A673 (cell line): ENCODE measurements at regions of chr15 and their contacts with region 1.

Region 1: DNA sequence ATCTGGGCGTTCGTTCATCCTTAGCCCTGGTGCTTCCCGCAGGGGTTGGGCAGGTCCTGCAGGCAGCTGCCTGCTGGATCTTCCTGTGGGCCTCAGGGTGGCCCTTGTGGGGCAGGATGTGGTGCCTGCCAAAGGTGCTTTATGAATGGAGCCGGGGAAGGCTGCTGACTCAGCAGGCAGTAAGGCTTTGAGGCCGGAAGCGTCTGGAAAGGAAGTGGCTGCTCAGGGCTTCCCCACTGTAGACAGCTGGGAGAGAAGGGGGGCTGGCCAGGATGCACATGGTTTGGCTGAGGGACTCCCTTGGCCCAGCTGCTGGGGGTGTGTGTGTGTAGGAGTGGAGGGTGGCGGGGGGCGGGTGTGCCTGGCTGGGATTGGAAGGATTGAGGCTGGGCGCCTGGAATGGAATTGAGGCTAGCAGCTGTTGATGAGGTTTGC is 12.9 kb downstream of the CD276 start:
- DNase-seq: peak; percentile 98
- H3K4me3 ChIP-seq: no peak overlapping the region
- H3K27ac ChIP-seq: peak overlapping the region; percentile 70
- H3K4me1 ChIP-seq: peaks cover 28% of the 10 kb centered on the region
- H3K27me3 ChIP-seq: no peaks in the 10 kb centered on the region
- CTCF ChIP-seq: no peak

Region 2: DNA sequence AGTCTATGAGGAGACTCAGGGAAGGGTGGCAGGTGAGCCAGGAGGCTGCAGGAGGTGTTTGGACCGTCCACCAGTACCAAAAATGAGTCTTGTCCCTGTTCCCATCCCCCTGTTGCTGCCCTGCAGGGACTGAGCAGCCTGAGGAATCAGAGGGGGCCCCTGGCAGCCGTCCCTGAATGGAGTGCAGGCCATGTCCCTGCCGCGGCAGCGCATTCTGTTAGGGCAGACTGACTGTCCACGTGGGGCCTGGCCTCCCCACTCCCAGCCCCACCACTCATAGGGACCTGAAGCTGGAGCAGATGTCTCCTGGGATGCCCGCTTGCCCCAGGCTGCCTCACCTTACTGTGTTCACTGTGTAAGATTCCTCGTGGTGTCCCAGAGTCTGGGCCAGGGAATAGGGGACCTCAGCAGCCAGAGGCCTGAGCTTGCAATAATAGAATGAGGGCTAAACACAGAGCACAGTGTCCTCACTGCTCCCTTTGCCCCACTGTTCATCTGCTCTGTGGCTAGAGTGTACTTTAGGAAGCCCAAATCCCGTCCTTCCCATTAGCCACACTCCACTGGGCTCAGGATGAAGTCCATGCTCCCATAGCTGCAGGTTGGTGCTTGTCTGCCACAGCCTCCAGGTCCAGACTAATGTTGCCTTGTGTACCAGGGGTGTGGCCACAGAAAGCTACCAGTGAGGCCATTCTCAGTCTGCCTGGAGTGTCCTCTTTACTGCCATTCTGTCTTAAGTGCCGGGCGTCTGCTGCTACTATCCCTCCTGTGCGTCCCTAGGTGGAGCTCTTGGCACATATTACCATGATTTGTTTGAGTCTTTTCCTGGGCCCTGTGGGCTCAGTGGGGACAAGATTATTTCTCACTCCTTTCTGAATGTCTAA is 391.5 kb before region 1 on chr15:
- CTCF ChIA-PET with region 1: no interaction called
- POLR2A ChIA-PET with region 1: no interaction called
- intact Hi-C with region 1: loop called (anchors 5 kb)
- DNase-seq: peak; percentile 71
- H3K4me3 ChIP-seq: no peak overlapping the region
- H3K27ac ChIP-seq: no peak overlapping the region
- H3K4me1 ChIP-seq: no peaks in the 10 kb centered on the region
- H3K27me3 ChIP-seq: no peaks in the 10 kb centered on the region
- CTCF ChIP-seq: peak; percentile 72

Region 3: GRCh38 chr15:73633111-73633990 is 63.7 kb before region 1 on chr15 and contains the start of gene NPTN:
- CTCF ChIA-PET with region 1: interaction called, 38 read pairs
- POLR2A ChIA-PET with region 1: no interaction called
- intact Hi-C with region 1: loop called (anchors 1 kb)
- DNase-seq: peak; percentile 98
- H3K4me3 ChIP-seq: peak within 1 kb of the TSS; percentile 75
- H3K27ac ChIP-seq: peak within 1 kb of the TSS; percentile 82
- H3K4me1 ChIP-seq: peaks cover 41% of the 10 kb centered on the region
- H3K27me3 ChIP-seq: no peaks in the 10 kb centered on the region
- CTCF ChIP-seq: no peak
- total RNA-seq, gene NPTN: 96.1 and 101 TPM in 2 replicates

Region 4: DNA sequence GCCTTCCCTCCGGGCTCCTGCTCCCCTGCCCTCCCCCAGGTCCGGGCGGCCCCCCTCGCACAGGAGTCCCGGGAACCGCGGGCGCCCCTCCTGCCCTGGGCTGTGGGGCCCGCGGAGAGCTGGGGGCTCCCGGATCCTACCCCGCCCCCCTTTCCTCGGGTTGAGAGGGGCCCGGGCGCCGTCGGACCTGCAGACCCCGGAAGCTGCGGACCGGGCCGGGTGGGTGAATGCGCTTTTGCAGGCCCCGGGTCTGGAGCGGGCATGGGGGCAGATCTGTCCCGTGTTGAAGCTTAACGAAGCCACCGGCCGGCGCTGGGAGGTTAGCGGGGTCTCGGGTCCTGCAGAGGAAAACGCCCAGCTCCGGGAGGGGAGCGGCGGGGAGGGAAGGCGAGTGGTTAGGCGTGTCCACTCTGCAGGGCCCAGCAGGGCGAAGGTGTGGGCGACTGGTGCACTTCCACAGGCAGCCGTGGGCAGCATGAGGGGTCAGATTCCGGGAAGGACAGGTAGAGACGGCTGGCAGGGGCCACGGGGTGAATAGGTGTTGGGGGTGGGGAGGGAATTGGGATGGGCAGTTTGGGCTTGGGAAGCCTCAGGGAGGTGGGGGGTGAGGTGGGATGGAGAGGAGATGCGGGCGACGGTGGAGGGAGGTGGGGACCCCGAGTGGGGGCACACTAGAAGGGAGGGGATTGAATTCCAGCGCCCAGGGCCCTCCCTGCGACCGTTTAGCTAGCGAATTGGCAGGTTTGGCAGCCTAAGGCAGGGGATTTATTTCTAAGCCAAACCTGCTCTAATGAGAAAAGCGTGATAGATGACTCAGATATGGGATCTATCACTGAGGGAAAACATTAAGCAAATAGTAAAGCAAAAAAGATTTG is 12.2 kb before region 1 on chr15:
- CTCF ChIA-PET with region 1: interaction called, 38 read pairs
- POLR2A ChIA-PET with region 1: no interaction called
- intact Hi-C with region 1: no loop called
- DNase-seq: peak; percentile 37
- H3K4me3 ChIP-seq: peak overlapping the region; percentile 97
- H3K27ac ChIP-seq: peak overlapping the region; percentile 90
- H3K4me1 ChIP-seq: peaks cover 23% of the 10 kb centered on the region
- H3K27me3 ChIP-seq: no peaks in the 10 kb centered on the region
- CTCF ChIP-seq: no peak

Region 5: GRCh38 chr15:73950831-73951561 is 253.9 kb after region 1 on chr15:
- CTCF ChIA-PET with region 1: interaction called, 15 read pairs
- POLR2A ChIA-PET with region 1: no interaction called
- intact Hi-C with region 1: no loop called
- DNase-seq: peak; percentile 97
- H3K4me3 ChIP-seq: no peak overlapping the region
- H3K27ac ChIP-seq: peak overlapping the region; percentile 75
- H3K4me1 ChIP-seq: peaks cover 23% of the 10 kb centered on the region
- H3K27me3 ChIP-seq: no peaks in the 10 kb centered on the region
- CTCF ChIP-seq: peak; percentile 85